Right lobe of liver (tissue), 6 donors: ENCODE measurements at regions of chr1 and their contacts with region 1.

Region 1: GRCh38 chr1:245166471-245166885 is 11.7 kb downstream of the KIF26B start:
- DNase-seq: no peak
- ATAC-seq: peak; percentile 50 to 65 (median 54)
- H3K4me3 ChIP-seq: peak overlapping the region in 2 of 3 donors; percentile 11 to 24
- H3K27ac ChIP-seq: peak overlapping the region in 1 of 3 donors; percentile 6
- H3K4me1 ChIP-seq: no peaks in the 10 kb centered on the region
- H3K27me3 ChIP-seq: no peaks in the 10 kb centered on the region
- CTCF ChIP-seq: no peak
- POLR2A ChIP-seq: no peak

Region 2: GRCh38 chr1:245245021-245245667 is 78.7 kb after region 1 on chr1:
- intact Hi-C with region 1: no loop called
- DNase-seq: no peak
- ATAC-seq: no peak
- H3K4me3 ChIP-seq: no peak overlapping the region
- H3K27ac ChIP-seq: no peak overlapping the region
- H3K4me1 ChIP-seq: no peaks in the 10 kb centered on the region
- H3K27me3 ChIP-seq: no peaks in the 10 kb centered on the region
- CTCF ChIP-seq: no peak
- POLR2A ChIP-seq: no peak

Region 3: GRCh38 chr1:245380790-245381535 is 214.5 kb after region 1 on chr1:
- intact Hi-C with region 1: loop called in 1 of 2 experiments (anchors 10 kb)
- DNase-seq: no peak
- ATAC-seq: no peak
- H3K4me3 ChIP-seq: no peak overlapping the region
- H3K27ac ChIP-seq: no peak overlapping the region
- H3K4me1 ChIP-seq: no peaks in the 10 kb centered on the region
- H3K27me3 ChIP-seq: no peaks in the 10 kb centered on the region
- CTCF ChIP-seq: peak in 2 of 4 donors; percentile 20 to 31
- POLR2A ChIP-seq: no peak